Ascending aorta (tissue), 2 donors: ENCODE measurements at regions of chr2 and their contacts with region 1.

Region 1: GRCh38 chr2:65432227-65433190 is at the start of gene SPRED2:
- DNase-seq: peak; percentile 81 to 98
- H3K4me3 ChIP-seq: peak within 1 kb of the TSS; percentile 86 to 96
- H3K27ac ChIP-seq: peak within 1 kb of the TSS; percentile 93 to 97
- H3K4me1 ChIP-seq: peaks cover 0 to 12% of the 10 kb centered on the region in 2 donors
- H3K27me3 ChIP-seq: no peaks in the 10 kb centered on the region
- CTCF ChIP-seq: peak in 1 of 3 experiments; percentile 17
- total RNA-seq, gene SPRED2: 18.5 TPM

Region 2: GRCh38 chr2:64750817-64751285 is 681.7 kb before region 1 on chr2:
- intact Hi-C with region 1: loop called (anchors 2 kb)
- DNase-seq: peak; percentile 99 to 100
- H3K4me3 ChIP-seq: peak overlapping the region; percentile 87 to 90
- H3K27ac ChIP-seq: peak overlapping the region; percentile 96 to 98
- H3K4me1 ChIP-seq: peaks cover 0 to 18% of the 10 kb centered on the region in 2 donors
- H3K27me3 ChIP-seq: no peaks in the 10 kb centered on the region
- CTCF ChIP-seq: no peak

Region 3: DNA sequence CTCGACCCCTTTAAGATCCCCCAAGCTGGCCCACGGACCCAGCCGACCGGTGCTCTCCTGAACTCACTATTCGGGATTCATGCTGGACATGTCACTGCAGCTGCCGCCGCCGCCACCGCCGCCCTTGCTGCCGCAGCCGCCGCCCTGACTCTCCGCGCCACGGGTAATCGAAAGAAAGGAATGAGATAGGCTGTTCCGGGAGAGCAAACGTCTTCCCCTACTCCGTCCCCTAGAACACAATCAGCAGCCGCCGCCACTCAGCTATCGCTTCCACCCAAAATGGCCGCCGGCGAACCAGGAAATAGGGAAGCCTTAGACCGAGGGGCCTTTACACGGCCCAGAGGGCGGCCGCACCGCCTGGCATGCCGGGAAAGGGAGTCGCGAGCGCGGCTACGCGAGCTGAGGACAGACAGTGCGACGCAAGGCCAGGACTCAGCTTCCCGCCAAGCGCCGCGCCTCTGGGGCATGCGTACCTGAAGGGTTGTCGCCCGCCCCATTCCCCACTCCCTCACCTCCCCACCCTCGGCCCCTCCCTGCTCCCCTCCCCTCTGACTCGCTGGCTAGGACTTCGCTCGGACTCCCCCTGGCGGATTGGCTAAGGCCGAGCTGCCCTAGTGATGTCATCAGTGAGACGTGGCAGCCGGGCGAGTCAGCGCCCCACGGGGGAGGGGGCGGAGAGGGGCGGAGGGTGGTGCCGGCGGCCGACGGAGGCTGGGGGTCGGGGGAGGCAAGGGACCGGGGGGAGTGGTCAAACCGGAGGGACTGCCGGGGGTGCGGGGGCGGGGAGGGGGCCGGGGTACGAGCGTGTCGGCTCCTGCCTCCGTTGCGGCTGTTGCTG is 302.5 kb before region 1 on chr2 and contains the start of gene RAB1A:
- intact Hi-C with region 1: loop called (anchors 1 kb)
- DNase-seq: peak; percentile 98 to 100
- H3K4me3 ChIP-seq: peak within 1 kb of the TSS; percentile 87 to 99
- H3K27ac ChIP-seq: peak within 1 kb of the TSS; percentile 98 to 99
- H3K4me1 ChIP-seq: peaks cover 14 to 29% of the 10 kb centered on the region in 2 donors
- H3K27me3 ChIP-seq: no peaks in the 10 kb centered on the region
- CTCF ChIP-seq: peak; percentile 13 to 50 (median 39)
- total RNA-seq, gene RAB1A: 56.4 TPM

Region 4: GRCh38 chr2:65300761-65301711 is 131.5 kb before region 1 on chr2:
- intact Hi-C with region 1: loop called (anchors 2 kb)
- DNase-seq: peak in 1 of 2 donors; percentile 78
- H3K4me3 ChIP-seq: peak overlapping the region in 1 of 2 donors; percentile 52
- H3K27ac ChIP-seq: peak overlapping the region; percentile 76 to 83
- H3K4me1 ChIP-seq: peaks cover 16 to 27% of the 10 kb centered on the region in 2 donors
- H3K27me3 ChIP-seq: no peaks in the 10 kb centered on the region
- CTCF ChIP-seq: no peak

Region 5: DNA sequence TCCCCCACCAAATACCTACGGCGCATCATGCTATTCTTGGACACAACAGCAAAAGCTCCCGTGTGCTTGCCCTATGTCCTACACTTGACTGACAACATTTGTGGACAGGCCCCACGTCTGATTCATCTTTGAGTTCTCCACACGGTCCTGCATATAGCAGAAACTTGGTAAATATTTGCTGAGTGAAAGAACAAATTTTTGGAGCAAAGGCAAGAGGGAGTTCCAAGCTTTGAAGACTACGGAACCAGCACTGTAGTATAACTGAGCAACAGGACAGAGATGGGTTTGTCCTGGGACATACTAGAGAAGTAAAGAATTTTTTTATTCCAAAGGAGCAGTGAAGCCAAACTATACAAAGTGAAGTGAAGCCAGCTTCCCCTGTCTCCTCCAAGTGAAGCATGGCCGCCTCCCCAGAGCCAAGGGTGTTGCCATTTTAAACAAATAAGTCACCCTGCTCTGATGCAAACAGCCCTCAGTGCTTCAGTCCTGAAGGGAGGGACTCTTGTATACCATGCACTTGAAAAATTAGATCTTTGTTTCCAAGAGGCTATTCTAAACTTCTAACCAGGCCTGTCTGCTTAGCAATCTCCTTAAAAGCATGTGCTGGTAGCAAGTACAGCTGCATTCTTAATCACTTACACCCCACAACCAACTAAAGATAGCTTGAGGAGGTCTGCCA is 36.0 kb before region 1 on chr2:
- intact Hi-C with region 1: loop called (anchors 2 kb)
- DNase-seq: peak in 1 of 2 donors; percentile 78
- H3K4me3 ChIP-seq: peak overlapping the region in 1 of 2 donors; percentile 12
- H3K27ac ChIP-seq: peak overlapping the region; percentile 68 to 71
- H3K4me1 ChIP-seq: peaks cover 0 to 33% of the 10 kb centered on the region in 2 donors
- H3K27me3 ChIP-seq: no peaks in the 10 kb centered on the region
- CTCF ChIP-seq: no peak

Region 6: GRCh38 chr2:65514555-65515195 is 82.2 kb after region 1 on chr2:
- intact Hi-C with region 1: no loop called
- DNase-seq: no peak
- H3K4me3 ChIP-seq: no peak overlapping the region
- H3K27ac ChIP-seq: no peak overlapping the region
- H3K4me1 ChIP-seq: no peaks in the 10 kb centered on the region
- H3K27me3 ChIP-seq: no peaks in the 10 kb centered on the region
- CTCF ChIP-seq: no peak